ENCODE measurements at regions of chr9 and their contacts with region 1.

Region 1: DNA sequence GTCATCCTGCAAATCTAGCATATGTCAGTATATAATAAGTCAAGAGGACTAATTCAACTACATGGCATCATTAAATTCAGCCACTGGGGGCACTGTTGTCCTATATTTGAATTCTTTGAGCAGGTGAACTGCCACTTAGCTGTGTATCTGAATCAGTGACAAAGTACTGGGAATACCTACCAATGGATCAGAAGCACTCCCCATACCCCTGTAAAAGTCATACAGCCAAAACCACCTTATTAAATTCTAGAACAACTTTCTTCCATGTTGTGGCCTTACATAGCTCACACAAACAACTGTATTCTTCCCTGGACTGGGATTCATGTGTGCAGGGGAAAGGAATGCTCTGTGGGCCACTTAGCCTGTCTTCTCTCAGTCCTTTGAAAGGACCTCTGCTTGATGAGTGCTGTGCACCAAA is 57.4 kb upstream of the PLPP6 start:
- DNase-seq: peak; percentile 82
- H3K4me3 Mint-ChIP-seq: no peak overlapping the region
- H3K27ac Mint-ChIP-seq: no peak overlapping the region
- H3K4me1 Mint-ChIP-seq: no peaks in the 10 kb centered on the region
- H3K27me3 Mint-ChIP-seq: no peaks in the 10 kb centered on the region
- CTCF ChIP-seq: peak; percentile 61

Region 2: GRCh38 chr9:4590430-4591122 is 14.1 kb before region 1 on chr9:
- CTCF ChIA-PET with region 1: interaction called, 15 read pairs
- POLR2A ChIA-PET with region 1: no interaction called
- intact Hi-C with region 1: no loop called
- DNase-seq: no peak
- H3K4me3 Mint-ChIP-seq: no peak overlapping the region
- H3K27ac Mint-ChIP-seq: no peak overlapping the region
- H3K4me1 Mint-ChIP-seq: no peaks in the 10 kb centered on the region
- H3K27me3 Mint-ChIP-seq: no peaks in the 10 kb centered on the region
- CTCF ChIP-seq: no peak

Region 3: GRCh38 chr9:4615251-4615650 is 10.6 kb after region 1 on chr9:
- CTCF ChIA-PET with region 1: interaction called, 20 read pairs
- POLR2A ChIA-PET with region 1: no interaction called
- intact Hi-C with region 1: no loop called
- DNase-seq: peak; percentile 45
- H3K4me3 Mint-ChIP-seq: no peak overlapping the region
- H3K27ac Mint-ChIP-seq: no peak overlapping the region
- H3K4me1 Mint-ChIP-seq: peaks cover 9% of the 10 kb centered on the region
- H3K27me3 Mint-ChIP-seq: no peaks in the 10 kb centered on the region
- CTCF ChIP-seq: no peak

Region 4: GRCh38 chr9:4662108-4662988 is 57.7 kb after region 1 on chr9 and contains the start of gene PLPP6:
- CTCF ChIA-PET with region 1: interaction called, 11 read pairs
- POLR2A ChIA-PET with region 1: no interaction called
- intact Hi-C with region 1: no loop called
- DNase-seq: peak; percentile 93
- H3K4me3 Mint-ChIP-seq: peak within 1 kb of the TSS; percentile 72
- H3K27ac Mint-ChIP-seq: peak within 1 kb of the TSS; percentile 65
- H3K4me1 Mint-ChIP-seq: peaks cover 40% of the 10 kb centered on the region
- H3K27me3 Mint-ChIP-seq: no peaks in the 10 kb centered on the region
- CTCF ChIP-seq: peak; percentile 29
- total RNA-seq, gene PLPP6: 6.3 and 8.3 TPM in 2 replicates

Region 5: GRCh38 chr9:4750023-4750673 is 145.5 kb after region 1 on chr9:
- CTCF ChIA-PET with region 1: no interaction called
- POLR2A ChIA-PET with region 1: no interaction called
- intact Hi-C with region 1: loop called (anchors 1 kb)
- DNase-seq: peak; percentile 64
- H3K4me3 Mint-ChIP-seq: no peak overlapping the region
- H3K27ac Mint-ChIP-seq: no peak overlapping the region
- H3K4me1 Mint-ChIP-seq: peaks cover 7% of the 10 kb centered on the region
- H3K27me3 Mint-ChIP-seq: no peaks in the 10 kb centered on the region
- CTCF ChIP-seq: peak; percentile 38